Mammary epithelial cell (primary cell): ENCODE measurements at regions of chr6 and their contacts with region 1.

Region 1: GRCh38 chr6:7107578-7108195 is at the start of gene RREB1:
- DNase-seq: peak; percentile 57
- H3K4me3 ChIP-seq: peak within 1 kb of the TSS; percentile 89 to 98 (median 96)
- H3K27ac ChIP-seq: peak within 1 kb of the TSS; percentile 78
- H3K4me1 ChIP-seq: peaks cover 25% of the 10 kb centered on the region
- H3K27me3 ChIP-seq: no peaks in the 10 kb centered on the region
- CTCF ChIP-seq: no peak
- total RNA-seq, gene RREB1: 25.3 to 39.3 TPM

Region 2: GRCh38 chr6:6803572-6803971 is 304.1 kb before region 1 on chr6:
- CTCF ChIA-PET with region 1: no interaction called
- dilution Hi-C with region 1: no loop called
- in situ Hi-C with region 1: no loop called
- intact Hi-C with region 1: loop called (anchors 1 kb)
- DNase-seq: peak; percentile 100
- H3K4me3 ChIP-seq: peak overlapping the region in 1 of 3 experiments; percentile 6
- H3K27ac ChIP-seq: peak overlapping the region; percentile 98
- H3K4me1 ChIP-seq: peaks cover 25% of the 10 kb centered on the region
- H3K27me3 ChIP-seq: no peaks in the 10 kb centered on the region
- CTCF ChIP-seq: peak in 1 of 2 donors; percentile 17

Region 3: GRCh38 chr6:6969761-6970223 is 137.9 kb before region 1 on chr6:
- CTCF ChIA-PET with region 1: no interaction called
- dilution Hi-C with region 1: no loop called
- in situ Hi-C with region 1: no loop called
- intact Hi-C with region 1: loop called (anchors 5 kb)
- DNase-seq: peak; percentile 89
- H3K4me3 ChIP-seq: no peak overlapping the region
- H3K27ac ChIP-seq: peak overlapping the region; percentile 3
- H3K4me1 ChIP-seq: peaks cover 23% of the 10 kb centered on the region
- H3K27me3 ChIP-seq: no peaks in the 10 kb centered on the region
- CTCF ChIP-seq: no peak

Region 4: GRCh38 chr6:7021301-7021700 is 86.4 kb before region 1 on chr6:
- CTCF ChIA-PET with region 1: no interaction called
- dilution Hi-C with region 1: no loop called
- in situ Hi-C with region 1: no loop called
- intact Hi-C with region 1: no loop called
- DNase-seq: no peak
- H3K4me3 ChIP-seq: no peak overlapping the region
- H3K27ac ChIP-seq: no peak overlapping the region
- H3K4me1 ChIP-seq: no peaks in the 10 kb centered on the region
- H3K27me3 ChIP-seq: no peaks in the 10 kb centered on the region
- CTCF ChIP-seq: no peak

Region 5: GRCh38 chr6:7145885-7146828 is 38.5 kb after region 1 on chr6:
- CTCF ChIA-PET with region 1: no interaction called
- dilution Hi-C with region 1: no loop called
- in situ Hi-C with region 1: no loop called
- intact Hi-C with region 1: loop called (anchors 5 kb)
- DNase-seq: peak; percentile 68
- H3K4me3 ChIP-seq: peak overlapping the region; percentile 6 to 25 (median 7)
- H3K27ac ChIP-seq: peak overlapping the region; percentile 63
- H3K4me1 ChIP-seq: peaks cover 52% of the 10 kb centered on the region
- H3K27me3 ChIP-seq: no peaks in the 10 kb centered on the region
- CTCF ChIP-seq: no peak

Region 6: DNA sequence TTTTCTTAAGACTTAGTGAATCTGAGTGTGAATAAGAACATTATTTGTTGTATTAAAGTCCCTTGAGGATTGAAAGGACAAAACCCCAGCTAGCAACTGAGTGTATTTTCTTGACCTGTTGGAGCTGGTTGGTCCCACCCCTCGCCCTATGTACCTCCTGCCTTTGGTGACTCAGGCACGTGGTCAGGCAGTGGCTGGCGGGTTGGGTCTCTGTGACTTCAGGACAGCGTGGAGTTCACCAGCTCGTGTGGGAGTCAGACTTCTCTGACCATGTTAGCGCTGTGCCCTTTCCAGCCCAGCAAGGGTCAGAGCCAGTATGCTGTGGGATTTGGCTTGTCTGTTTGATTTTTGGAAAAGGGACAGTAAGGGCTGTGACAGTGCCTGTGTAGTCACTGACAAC is 111.6 kb after region 1 on chr6:
- CTCF ChIA-PET with region 1: no interaction called
- dilution Hi-C with region 1: no loop called
- in situ Hi-C with region 1: no loop called
- intact Hi-C with region 1: loop called (anchors 5 kb)
- DNase-seq: peak; percentile 28
- H3K4me3 ChIP-seq: no peak overlapping the region
- H3K27ac ChIP-seq: no peak overlapping the region
- H3K4me1 ChIP-seq: peaks cover 42% of the 10 kb centered on the region
- H3K27me3 ChIP-seq: no peaks in the 10 kb centered on the region
- CTCF ChIP-seq: no peak